A549 (cell line): ENCODE measurements at regions of chr12 and their contacts with region 1.

Region 1: GRCh38 chr12:65556681-65557437 is 267.4 kb upstream of the HMGA2 start:
- DNase-seq: peak; percentile 77 to 82
- ATAC-seq: peak; percentile 100
- H3K4me3 ChIP-seq: no peak overlapping the region
- H3K27ac ChIP-seq: peak overlapping the region; percentile 41 to 42; a peak in 2 of 6 replicates
- H3K4me1 ChIP-seq: no peaks in the 10 kb centered on the region
- CTCF ChIP-seq: peak; percentile 91
- EP300 ChIP-seq: no peak
- POLR2A ChIP-seq: no peak
- RAD21 ChIP-seq: peak; percentile 95 to 96

Region 2: GRCh38 chr12:65546528-65546927 is 10.3 kb before region 1 on chr12:
- CTCF ChIA-PET with region 1: interaction called, 22 read pairs
- POLR2A ChIA-PET with region 1: no interaction called
- DNase-seq: no peak
- ATAC-seq: no peak
- H3K4me3 ChIP-seq: no peak overlapping the region
- H3K27ac ChIP-seq: no peak overlapping the region
- H3K4me1 ChIP-seq: no peaks in the 10 kb centered on the region
- CTCF ChIP-seq: no peak
- EP300 ChIP-seq: no peak
- POLR2A ChIP-seq: no peak
- RAD21 ChIP-seq: no peak

Region 3: DNA sequence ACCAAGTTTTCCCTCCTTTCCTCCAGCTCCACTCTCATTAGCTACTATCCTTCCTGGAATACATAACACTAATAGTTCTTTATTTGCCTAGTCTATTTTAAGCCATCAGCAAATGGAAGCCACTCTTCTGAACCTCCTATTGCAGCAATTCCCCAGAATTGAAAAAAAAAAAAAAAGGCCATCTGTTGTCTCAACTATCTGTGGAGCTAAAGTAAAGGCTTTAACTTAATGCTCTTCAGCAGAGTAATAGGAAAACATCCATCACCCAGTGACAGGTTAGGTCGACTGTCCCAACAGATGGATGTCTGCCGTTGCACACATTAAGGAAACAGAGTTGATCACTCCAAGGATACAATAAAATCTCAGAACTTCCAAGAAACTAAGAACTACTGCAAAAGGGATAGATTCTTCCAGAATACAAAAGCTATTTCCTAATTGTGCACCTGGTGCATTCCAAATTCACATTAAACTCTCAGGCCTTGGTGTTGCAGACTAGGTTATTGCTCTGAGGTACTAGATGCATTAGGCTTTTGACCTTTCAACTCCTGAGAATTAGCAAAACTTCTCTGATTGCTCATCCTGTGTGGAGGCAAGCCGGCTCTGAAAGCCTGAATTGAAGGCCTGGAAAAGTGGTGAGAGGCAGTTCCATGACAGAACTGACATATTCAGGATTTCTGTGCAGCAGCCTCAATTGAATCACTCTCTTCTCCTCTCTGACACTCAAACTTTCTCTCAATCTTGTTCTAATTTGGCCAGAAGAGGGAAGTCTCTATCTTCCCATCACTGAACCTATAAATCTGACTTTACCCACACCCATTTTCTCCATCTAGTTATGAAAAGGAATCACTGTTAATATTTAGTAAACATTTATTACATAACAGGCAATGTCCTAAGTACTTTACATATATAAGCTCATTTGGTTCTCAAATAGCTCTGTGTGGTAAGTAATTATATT is 29.1 kb after region 1 on chr12:
- CTCF ChIA-PET with region 1: interaction called, 12 read pairs
- POLR2A ChIA-PET with region 1: no interaction called
- DNase-seq: no peak
- ATAC-seq: no peak
- H3K4me3 ChIP-seq: no peak overlapping the region
- H3K27ac ChIP-seq: no peak overlapping the region
- H3K4me1 ChIP-seq: no peaks in the 10 kb centered on the region
- CTCF ChIP-seq: no peak
- EP300 ChIP-seq: no peak
- POLR2A ChIP-seq: no peak
- RAD21 ChIP-seq: no peak

Region 4: GRCh38 chr12:65695113-65695865 is 138.4 kb after region 1 on chr12:
- CTCF ChIA-PET with region 1: interaction called, 11 read pairs
- POLR2A ChIA-PET with region 1: no interaction called
- DNase-seq: peak; percentile 34 to 90
- ATAC-seq: peak; percentile 93 to 95
- H3K4me3 ChIP-seq: no peak overlapping the region
- H3K27ac ChIP-seq: peak overlapping the region; percentile 60 to 61; a peak in 5 of 6 replicates
- H3K4me1 ChIP-seq: peaks cover 30% of the 10 kb centered on the region
- CTCF ChIP-seq: no peak
- EP300 ChIP-seq: peak; percentile 59 to 63; a peak in 1 of 5 replicates
- POLR2A ChIP-seq: no peak
- RAD21 ChIP-seq: 0 out of 5 replicates have a peak, but pooled peaks of 1 of the 2 experiments have one; percentile 19

Region 5: GRCh38 chr12:65769880-65770279 is 213.0 kb after region 1 on chr12:
- CTCF ChIA-PET with region 1: no interaction called
- POLR2A ChIA-PET with region 1: no interaction called
- DNase-seq: no peak
- ATAC-seq: no peak
- H3K4me3 ChIP-seq: no peak overlapping the region
- H3K27ac ChIP-seq: no peak overlapping the region
- H3K4me1 ChIP-seq: no peaks in the 10 kb centered on the region
- CTCF ChIP-seq: no peak
- EP300 ChIP-seq: no peak
- POLR2A ChIP-seq: no peak
- RAD21 ChIP-seq: no peak

Region 6: GRCh38 chr12:66087365-66087943 is 530.6 kb after region 1 on chr12:
- CTCF ChIA-PET with region 1: interaction called, 10 read pairs
- POLR2A ChIA-PET with region 1: interaction called, 4 read pairs
- DNase-seq: peak; percentile 45 to 69
- ATAC-seq: peak; percentile 83 to 91; a peak in 5 of 6 replicates
- H3K4me3 ChIP-seq: no peak overlapping the region
- H3K27ac ChIP-seq: no peak overlapping the region
- H3K4me1 ChIP-seq: 0 out of 3 replicates have a peak, but pooled peaks cover 3% of the 10 kb centered on the region
- CTCF ChIP-seq: peak; percentile 86
- EP300 ChIP-seq: no peak
- POLR2A ChIP-seq: no peak
- RAD21 ChIP-seq: peak; percentile 88 to 92